ENCODE measurements at regions of chr1 and their contacts with region 1.

Region 1: DNA sequence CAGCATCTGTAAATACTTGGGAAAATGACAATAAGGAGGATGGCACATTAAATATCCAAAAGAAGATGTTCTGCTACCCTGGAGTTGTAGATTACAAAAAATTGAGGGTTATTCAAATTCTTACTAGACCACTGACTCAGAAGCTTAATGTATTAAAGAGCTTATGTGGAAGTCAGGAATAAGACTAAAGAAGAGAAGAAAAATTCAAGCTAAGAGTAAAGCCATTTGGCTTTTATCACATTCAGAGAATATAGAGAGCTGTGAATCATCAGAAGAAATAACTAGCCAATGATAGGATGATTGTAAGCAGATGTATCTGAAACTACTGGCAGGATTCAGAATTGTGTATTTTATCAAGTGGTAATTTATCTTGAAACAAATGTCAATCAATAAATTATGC is 237.0 kb downstream of the TBX15 start:
- DNase-seq: no peak
- CTCF ChIP-seq: no peak

Region 2: DNA sequence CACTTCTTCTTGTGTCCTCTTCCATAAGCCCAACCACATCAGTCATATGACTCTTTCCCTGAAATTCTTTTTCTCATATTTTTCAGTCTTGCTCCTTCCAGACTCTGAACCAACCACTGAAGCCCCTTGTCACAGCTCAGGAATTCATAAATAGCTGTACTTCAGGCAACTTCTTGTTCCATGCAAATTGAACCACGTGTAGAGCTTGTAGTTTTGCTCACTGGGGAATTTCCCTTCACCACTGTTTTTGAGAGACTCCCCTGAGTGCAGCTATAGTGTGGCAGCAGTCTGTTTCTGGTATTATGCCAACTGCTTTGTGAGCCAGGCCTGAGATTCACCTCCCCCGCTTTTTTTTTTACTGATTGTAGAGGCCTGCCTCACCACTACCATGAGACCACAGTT is 415.8 kb before region 1 on chr1:
- CTCF ChIA-PET with region 1: no interaction called
- POLR2A ChIA-PET with region 1: interaction called, 10 read pairs
- DNase-seq: peak; percentile 21
- CTCF ChIP-seq: no peak

Region 3: DNA sequence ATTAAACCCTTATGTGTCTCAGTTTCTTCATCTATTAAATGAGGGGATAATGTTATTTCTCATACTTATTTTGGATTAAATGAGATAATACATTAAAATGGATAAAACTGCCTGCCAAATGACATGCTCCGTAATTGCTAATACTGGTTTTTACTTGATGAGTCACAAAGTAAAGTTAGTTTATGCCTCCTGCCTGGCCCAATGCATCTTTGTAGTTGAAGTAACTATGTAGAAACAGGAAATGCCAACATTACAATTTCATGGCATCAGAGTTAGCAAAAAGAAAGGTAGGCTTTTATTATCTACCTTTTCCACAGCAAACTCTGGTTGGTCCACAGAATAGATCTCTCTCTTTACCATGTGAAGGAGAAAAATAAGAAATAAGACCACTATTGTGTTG is 22.5 kb after region 1 on chr1:
- CTCF ChIA-PET with region 1: no interaction called
- POLR2A ChIA-PET with region 1: no interaction called
- DNase-seq: no peak
- CTCF ChIP-seq: no peak

Region 4: GRCh38 chr1:118809586-118809985 is 58.4 kb after region 1 on chr1:
- CTCF ChIA-PET with region 1: no interaction called
- POLR2A ChIA-PET with region 1: no interaction called
- DNase-seq: no peak
- CTCF ChIP-seq: no peak

Measured in GM10248 (cell line).